ENCODE measurements at regions of chr7 and their contacts with region 1.

Region 1: DNA sequence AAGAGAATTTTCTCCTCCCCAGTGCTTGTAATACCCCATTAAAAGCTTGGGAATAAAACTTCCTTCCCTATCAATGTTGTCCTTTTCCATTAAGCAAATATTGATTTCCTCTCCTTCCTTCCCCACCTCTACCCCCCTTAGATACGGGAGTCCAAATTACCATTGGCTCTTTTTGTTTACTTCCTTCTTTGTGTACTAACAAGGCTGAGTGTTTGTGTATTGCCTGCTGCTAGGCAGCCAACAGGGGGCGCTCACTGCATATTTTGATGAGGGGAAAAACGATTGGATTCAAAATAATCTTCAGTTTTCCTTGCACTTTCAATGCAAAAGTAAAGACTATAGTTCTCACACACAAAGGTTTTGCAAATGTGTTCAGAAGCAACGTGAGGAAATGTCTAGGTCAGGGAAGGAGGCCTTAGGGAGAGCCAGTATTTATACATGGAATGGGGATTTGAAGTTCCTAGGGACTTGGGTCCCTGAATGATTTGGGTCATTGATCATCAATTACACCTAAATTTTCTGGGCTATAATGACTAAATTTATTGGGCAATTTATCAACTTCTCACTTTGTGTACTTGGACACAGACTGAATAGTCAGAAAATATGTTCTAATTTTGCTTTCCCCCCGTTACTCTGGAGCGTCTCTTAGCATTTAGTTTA is 23.6 kb upstream of the VPS41 start:
- DNase-seq: peak; percentile 16
- H3K4me3 ChIP-seq: no peak overlapping the region
- H3K27ac ChIP-seq: no peak overlapping the region
- H3K4me1 ChIP-seq: no peaks in the 10 kb centered on the region
- H3K27me3 ChIP-seq: no peaks in the 10 kb centered on the region
- CTCF ChIP-seq: peak; percentile 96 to 97

Region 2: GRCh38 chr7:38796626-38797501 is 135.8 kb before region 1 on chr7:
- CTCF ChIA-PET with region 1: no interaction called
- dilution Hi-C with region 1: no loop called
- in situ Hi-C with region 1: no loop called
- intact Hi-C with region 1: loop called (anchors 2 kb)
- DNase-seq: peak; percentile 39
- H3K4me3 ChIP-seq: no peak overlapping the region
- H3K27ac ChIP-seq: no peak overlapping the region
- H3K4me1 ChIP-seq: peaks cover 12% of the 10 kb centered on the region
- H3K27me3 ChIP-seq: no peaks in the 10 kb centered on the region
- CTCF ChIP-seq: peak; percentile 68 to 71

Region 3: GRCh38 chr7:39566023-39566921 is 633.6 kb after region 1 on chr7 and contains the start of gene YAE1:
- CTCF ChIA-PET with region 1: no interaction called
- dilution Hi-C with region 1: no loop called
- in situ Hi-C with region 1: no loop called
- intact Hi-C with region 1: no loop called
- DNase-seq: peak; percentile 72
- H3K4me3 ChIP-seq: peak within 1 kb of the TSS; percentile 70 to 97 (median 85)
- H3K27ac ChIP-seq: peak within 1 kb of the TSS; percentile 65
- H3K4me1 ChIP-seq: peaks cover 9% of the 10 kb centered on the region
- H3K27me3 ChIP-seq: no peaks in the 10 kb centered on the region
- CTCF ChIP-seq: no peak
- total RNA-seq, gene YAE1: 22.7 to 23.1 TPM